Heart left ventricle (tissue), 16 donors: ENCODE measurements at regions of chr1 and their contacts with region 1.

Region 1: DNA sequence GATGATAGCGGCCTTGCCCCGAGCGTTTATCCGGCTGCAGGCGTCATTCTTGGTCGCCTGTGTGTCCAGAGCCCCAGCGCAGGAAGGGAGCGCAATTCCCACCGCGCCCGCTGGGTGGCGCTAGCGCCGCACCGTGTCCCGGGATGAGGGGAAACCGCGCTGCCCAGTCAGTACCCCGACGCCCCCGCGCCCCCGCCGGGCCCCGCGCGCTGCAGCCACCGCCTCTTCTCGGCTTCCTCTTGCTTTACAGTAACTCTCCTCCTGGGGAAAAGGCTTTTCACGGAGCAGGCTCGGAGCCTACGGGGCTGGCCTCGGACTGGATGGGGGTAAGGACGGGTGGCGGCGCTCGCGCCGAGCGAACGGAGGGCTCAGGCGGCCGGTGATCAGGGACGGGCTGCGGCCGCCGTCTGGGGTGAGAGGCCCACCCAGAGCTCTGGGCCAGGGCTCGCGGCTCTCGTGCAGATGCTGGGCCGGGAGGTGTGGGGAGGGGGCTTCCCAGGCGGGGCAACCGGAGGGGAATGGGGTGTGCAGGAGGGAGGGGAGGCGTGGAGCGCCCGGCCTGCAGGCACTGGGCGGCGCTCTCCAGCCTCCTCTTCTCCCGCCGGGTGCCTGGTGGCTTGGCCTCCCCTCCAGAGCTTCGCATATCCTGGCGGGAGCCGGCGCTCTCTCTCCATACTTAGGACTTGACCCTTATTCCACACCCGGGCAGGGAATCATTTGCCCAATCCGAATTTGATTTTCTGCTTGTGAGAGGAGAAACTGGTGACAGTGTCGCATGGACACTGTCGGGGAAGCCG is 29.8 kb downstream of the TEX35 start:
- DNase-seq: peak; percentile 86 to 95 (median 88)
- ATAC-seq: peak; percentile 83 to 94 (median 93)
- H3K4me3 ChIP-seq: peak overlapping the region; percentile 62 to 86 (median 76)
- H3K27ac ChIP-seq: peak overlapping the region; percentile 51 to 90 (median 84)
- H3K4me1 ChIP-seq: peaks cover 0 to 25% (median 10%) of the 10 kb centered on the region in 12 donors
- H3K27me3 ChIP-seq: no peaks in the 10 kb centered on the region
- CTCF ChIP-seq: peak; percentile 92 to 100 (median 98)
- POLR2A ChIP-seq: no peak

Region 2: GRCh38 chr1:178477841-178478240 is 64.9 kb before region 1 on chr1:
- intact Hi-C with region 1: no loop called
- DNase-seq: no peak
- ATAC-seq: no peak
- H3K4me3 ChIP-seq: no peak overlapping the region
- H3K27ac ChIP-seq: no peak overlapping the region
- H3K4me1 ChIP-seq: no peaks in the 10 kb centered on the region
- H3K27me3 ChIP-seq: no peaks in the 10 kb centered on the region
- CTCF ChIP-seq: no peak
- POLR2A ChIP-seq: no peak

Region 3: DNA sequence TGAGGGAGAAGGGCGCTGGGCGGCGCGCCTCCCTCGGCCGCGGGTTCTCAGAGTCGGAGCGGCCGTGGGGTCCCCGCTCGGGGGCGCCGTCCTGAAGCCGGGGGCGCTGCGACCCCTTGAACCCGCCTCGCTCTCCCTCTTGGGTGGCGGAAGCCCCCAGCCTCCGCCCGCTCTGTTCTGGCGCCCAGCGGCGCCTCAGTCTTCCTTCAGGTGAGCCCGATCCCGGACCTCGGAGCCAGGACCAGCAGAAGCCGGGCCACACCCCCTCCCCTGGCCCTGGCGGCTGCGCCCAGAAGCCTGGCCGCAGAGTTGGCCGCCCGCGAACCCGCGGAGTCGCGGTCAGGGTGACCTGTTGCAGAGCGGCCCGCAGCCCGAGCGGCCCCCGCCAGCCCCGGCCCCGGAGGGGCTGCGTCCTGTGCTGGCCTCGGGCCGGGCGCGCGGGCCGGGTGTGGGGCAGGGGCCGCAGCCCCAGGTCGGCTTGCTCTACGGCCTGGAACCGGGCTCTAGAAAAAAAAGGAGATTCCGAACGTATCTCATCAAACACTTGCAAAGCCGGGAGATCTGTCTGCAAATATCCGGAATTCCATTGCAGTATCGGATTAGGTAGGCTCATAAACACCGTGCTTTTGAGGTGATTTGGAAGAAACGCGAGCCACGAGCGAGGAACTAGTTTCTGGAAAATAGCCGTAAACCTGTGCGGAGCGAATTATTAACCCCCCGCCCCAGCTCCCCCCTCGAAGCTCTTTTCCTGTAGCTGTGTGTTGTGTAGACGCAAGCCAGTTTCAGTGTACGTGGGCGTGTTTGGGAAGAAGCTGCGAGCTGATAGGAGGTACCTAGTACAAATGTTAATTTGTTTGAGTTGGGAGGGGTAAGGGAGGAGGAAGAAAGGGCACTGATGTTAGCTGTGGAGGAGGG is 183.1 kb after region 1 on chr1:
- intact Hi-C with region 1: loop called in 1 of 10 experiments (anchors 2 kb)
- DNase-seq: peak; percentile 47 to 78 (median 73)
- ATAC-seq: peak; percentile 85 to 90 (median 86)
- H3K4me3 ChIP-seq: peak overlapping the region; percentile 77 to 97 (median 88)
- H3K27ac ChIP-seq: peak overlapping the region; percentile 33 to 91 (median 78)
- H3K4me1 ChIP-seq: peaks cover 0 to 14% (median 3%) of the 10 kb centered on the region in 12 donors
- H3K27me3 ChIP-seq: no peaks in the 10 kb centered on the region
- CTCF ChIP-seq: peak in 2 of 12 donors; percentile 4 to 21
- POLR2A ChIP-seq: no peak

Region 4: DNA sequence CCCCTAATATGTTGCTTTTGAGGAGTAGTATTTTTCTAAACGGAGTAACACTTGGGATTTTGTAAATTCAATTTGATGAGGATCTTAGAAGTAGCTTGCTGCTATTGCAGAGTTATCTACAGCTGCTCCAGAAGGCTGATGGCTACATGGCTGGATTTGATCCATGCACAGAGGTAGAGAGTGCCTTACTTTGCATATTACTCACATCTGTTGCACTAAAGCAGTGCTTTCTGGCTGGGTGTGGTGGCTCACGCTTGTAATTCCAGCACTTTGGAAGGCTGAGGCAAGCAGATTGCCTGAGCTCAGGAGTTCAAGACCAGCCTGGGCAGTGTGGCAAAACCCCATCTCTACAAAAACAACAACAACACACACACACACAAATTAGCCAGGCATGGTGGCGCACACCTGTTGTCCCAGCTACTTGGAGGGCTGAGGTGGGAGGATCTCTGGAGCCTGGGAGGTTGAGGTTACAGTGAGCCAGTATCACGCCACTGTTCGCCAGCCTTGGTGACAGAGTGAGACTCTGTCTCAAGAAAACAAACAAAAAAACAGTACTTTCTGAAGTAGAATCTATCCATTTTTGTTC is 206.9 kb after region 1 on chr1:
- intact Hi-C with region 1: loop called (anchors 1 to 5 kb)
- DNase-seq: no peak
- ATAC-seq: no peak
- H3K4me3 ChIP-seq: no peak overlapping the region
- H3K27ac ChIP-seq: no peak overlapping the region
- H3K4me1 ChIP-seq: peaks cover 0 to 5% (median 0%) of the 10 kb centered on the region in 12 donors
- H3K27me3 ChIP-seq: no peaks in the 10 kb centered on the region
- CTCF ChIP-seq: no peak
- POLR2A ChIP-seq: no peak

Region 5: DNA sequence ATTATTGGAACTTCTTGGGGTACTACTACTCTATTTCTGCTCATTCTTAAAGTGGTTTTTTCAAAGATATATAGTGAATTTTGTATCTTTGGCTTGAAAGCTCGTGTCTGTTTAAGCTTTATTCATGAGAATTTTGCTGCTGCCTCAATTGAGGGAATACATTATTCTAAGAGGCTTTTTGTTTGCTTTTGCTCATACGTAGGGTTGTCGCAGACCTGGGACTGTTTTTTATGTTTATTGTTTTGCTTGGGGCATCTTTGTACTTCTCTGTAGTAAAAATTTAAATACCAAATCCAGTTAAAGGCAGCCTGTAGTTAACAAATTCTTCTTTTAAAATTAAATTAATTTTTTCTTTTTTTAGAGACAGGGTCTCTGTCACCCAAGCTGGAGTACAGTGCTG is 265.8 kb after region 1 on chr1:
- intact Hi-C with region 1: loop called in 1 of 10 experiments (anchors 1 kb)
- DNase-seq: no peak
- ATAC-seq: no peak
- H3K4me3 ChIP-seq: no peak overlapping the region
- H3K27ac ChIP-seq: no peak overlapping the region
- H3K4me1 ChIP-seq: peaks cover 0 to 4% (median 0%) of the 10 kb centered on the region in 12 donors
- H3K27me3 ChIP-seq: no peaks in the 10 kb centered on the region
- CTCF ChIP-seq: no peak
- POLR2A ChIP-seq: no peak